Psoas muscle (tissue), 8 donors: ENCODE measurements at regions of chr15 and their contacts with region 1.

Region 1: DNA sequence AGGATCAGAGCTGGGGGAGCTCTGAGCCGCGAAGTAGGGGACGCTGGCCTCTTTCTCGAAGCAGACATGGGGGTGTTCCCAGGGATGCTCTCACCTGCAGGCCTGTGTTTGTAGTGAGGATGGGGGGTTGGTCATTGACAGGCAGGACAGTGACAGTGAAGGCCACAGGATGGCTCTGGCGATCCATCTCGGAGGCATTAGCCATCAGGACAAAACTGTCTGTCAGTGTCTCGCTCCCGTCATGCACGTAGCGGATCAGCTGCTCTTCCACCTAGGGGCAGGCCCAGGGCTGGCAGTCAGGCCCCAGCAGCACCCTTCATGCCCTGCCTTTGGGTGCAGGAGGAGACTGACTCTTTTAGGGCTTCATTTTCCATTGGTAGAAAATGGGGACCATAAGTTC is 28.0 kb downstream of the CSPG4 start:
- DNase-seq: no peak
- ATAC-seq: no peak
- H3K4me3 ChIP-seq: no peak overlapping the region
- H3K27ac ChIP-seq: no peak overlapping the region
- H3K4me1 ChIP-seq: no peaks in the 10 kb centered on the region
- H3K27me3 ChIP-seq: no peaks in the 10 kb centered on the region
- CTCF ChIP-seq: no peak

Region 2: DNA sequence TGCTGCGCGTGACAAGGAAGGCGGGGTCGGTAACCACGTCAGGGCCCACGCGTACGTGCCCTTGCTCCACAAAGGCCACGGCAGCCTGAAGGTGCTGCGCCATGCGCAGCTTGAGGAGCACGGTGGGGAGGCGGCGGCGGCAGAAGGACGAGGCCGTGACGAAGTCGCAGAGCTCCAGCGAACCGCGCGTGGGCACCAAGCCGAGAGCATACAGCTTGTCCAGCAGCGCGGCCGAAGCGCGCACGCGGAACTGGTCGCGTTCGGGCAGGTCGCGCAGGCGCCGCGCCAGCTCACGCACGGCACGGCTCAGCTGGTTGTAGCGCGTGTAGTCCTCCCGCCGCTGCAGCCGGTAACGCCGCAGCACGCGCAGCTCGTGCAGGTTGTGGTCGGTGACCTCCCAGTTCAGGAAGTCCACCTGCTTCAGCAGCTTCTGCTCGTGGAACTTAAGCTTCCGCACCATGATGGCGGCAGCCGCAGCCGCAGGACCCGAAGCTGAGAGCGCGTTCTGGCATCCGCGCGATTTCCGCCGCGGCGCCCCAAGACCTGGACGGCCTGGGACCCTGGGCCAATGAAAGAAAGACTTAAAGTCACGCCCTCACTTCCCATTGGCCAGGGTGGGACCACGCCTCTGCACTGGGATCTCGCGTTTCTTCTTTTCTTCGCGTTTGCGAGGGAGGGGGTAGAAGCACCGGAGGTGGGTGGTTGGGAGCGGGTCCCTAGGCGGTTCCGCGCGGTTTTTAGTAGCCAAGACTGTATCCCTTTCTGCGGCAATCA is 44.7 kb before region 1 on chr15 and contains the start of gene IMP3:
- intact Hi-C with region 1: loop called in 1 of 2 experiments (anchors 2 kb)
- DNase-seq: peak; percentile 94 to 97
- ATAC-seq: peak; percentile 94 to 98 (median 96)
- H3K4me3 ChIP-seq: peak within 1 kb of the TSS; percentile 94
- H3K27ac ChIP-seq: peak within 1 kb of the TSS; percentile 96
- H3K4me1 ChIP-seq: peaks cover 23% of the 10 kb centered on the region
- H3K27me3 ChIP-seq: no peaks in the 10 kb centered on the region
- CTCF ChIP-seq: no peak
- total RNA-seq, gene IMP3: 41.6 to 51.0 (median 43.8) TPM

Region 3: DNA sequence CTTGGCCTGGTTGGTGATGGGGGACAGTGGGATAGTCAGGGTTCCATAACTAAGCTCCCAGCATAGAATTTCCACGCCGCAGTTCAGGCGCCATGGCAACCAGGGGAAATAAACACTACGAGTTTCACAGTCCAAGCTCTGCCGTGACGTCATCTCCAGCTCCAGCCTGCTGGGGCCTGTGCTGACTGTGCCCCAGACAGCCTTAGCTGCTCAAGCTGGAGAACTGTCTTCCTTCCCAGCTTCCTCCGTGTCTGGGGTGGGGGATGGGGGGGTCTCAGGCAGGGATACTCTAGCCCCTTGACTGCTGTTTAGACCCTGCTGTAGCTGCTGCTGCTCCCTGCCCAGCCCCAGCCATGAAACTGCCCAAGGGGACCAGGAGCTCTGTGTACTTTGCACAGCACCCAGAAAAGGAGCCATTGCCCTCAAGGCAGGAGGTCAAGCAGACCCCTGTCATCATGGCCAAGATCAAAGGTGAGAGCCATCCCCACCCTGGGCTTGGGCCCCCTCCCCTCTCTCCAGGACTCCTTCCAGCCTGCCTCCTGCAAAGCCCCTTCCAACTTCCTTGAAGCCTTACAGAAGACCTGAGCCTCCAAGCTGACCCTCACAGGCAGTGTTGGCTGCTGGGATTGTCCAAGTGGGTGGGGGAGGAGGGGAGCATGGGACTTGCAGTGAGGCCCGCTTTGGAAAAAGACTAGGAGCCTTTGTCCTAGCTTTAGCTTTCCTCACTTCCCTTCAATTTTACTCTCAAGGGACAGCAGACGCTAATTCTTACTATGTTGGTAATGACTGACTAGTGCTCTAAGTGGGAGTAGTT is 39.4 kb after region 1 on chr15:
- intact Hi-C with region 1: loop called in 1 of 2 experiments (anchors 5 kb)
- DNase-seq: peak; percentile 85 to 91
- ATAC-seq: peak; percentile 34 to 68 (median 44)
- H3K4me3 ChIP-seq: no peak overlapping the region
- H3K27ac ChIP-seq: peak overlapping the region; percentile 30
- H3K4me1 ChIP-seq: no peaks in the 10 kb centered on the region
- H3K27me3 ChIP-seq: no peaks in the 10 kb centered on the region
- CTCF ChIP-seq: no peak

Region 4: GRCh38 chr15:75732809-75733451 is 48.3 kb after region 1 on chr15:
- intact Hi-C with region 1: loop called in 1 of 2 experiments (anchors 2 kb)
- DNase-seq: peak; percentile 75 to 82
- ATAC-seq: peak; percentile 76 to 88 (median 83)
- H3K4me3 ChIP-seq: no peak overlapping the region
- H3K27ac ChIP-seq: no peak overlapping the region
- H3K4me1 ChIP-seq: no peaks in the 10 kb centered on the region
- H3K27me3 ChIP-seq: no peaks in the 10 kb centered on the region
- CTCF ChIP-seq: peak; percentile 87

Region 5: DNA sequence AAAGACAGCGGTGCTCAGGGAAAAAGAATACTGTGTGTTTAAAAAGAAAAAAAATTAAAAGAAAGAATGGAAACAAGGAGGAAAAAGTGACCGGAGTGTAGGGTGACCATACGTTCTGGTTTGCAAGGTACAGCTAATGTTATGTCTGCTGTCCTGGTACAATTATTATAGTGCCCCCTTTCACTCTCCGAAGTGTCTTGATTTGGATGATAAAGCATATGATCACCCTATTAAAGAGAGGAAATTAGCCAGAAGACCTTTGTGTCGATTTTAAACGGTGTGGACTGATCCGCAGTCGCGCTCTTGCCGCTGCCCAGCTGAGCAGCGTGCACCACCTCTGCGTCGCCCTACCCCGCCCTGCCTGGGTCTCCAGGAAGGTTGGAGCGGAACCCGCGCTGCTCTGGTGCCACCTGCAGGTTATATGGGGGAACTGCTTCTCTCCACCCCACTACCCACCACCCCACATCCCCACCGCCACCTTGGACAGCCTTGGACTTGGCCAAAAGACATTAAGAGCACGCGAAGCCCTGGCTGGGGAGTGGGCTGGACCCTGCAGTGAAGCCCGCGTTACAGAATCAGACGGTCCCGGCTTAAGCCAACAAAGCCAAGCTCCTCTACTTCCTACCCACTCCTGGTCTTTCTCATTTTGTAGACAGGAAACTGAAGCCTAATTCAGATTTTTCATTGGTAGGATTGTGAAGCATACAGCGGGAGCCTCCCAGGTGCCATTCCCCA is 117.4 kb after region 1 on chr15:
- intact Hi-C with region 1: loop called in 1 of 2 experiments (anchors 2 kb)
- DNase-seq: peak; percentile 80 to 91
- ATAC-seq: peak; percentile 98 to 100 (median 99)
- H3K4me3 ChIP-seq: peak overlapping the region; percentile 48
- H3K27ac ChIP-seq: no peak overlapping the region
- H3K4me1 ChIP-seq: no peaks in the 10 kb centered on the region
- H3K27me3 ChIP-seq: no peaks in the 10 kb centered on the region
- CTCF ChIP-seq: peak; percentile 90

Region 6: DNA sequence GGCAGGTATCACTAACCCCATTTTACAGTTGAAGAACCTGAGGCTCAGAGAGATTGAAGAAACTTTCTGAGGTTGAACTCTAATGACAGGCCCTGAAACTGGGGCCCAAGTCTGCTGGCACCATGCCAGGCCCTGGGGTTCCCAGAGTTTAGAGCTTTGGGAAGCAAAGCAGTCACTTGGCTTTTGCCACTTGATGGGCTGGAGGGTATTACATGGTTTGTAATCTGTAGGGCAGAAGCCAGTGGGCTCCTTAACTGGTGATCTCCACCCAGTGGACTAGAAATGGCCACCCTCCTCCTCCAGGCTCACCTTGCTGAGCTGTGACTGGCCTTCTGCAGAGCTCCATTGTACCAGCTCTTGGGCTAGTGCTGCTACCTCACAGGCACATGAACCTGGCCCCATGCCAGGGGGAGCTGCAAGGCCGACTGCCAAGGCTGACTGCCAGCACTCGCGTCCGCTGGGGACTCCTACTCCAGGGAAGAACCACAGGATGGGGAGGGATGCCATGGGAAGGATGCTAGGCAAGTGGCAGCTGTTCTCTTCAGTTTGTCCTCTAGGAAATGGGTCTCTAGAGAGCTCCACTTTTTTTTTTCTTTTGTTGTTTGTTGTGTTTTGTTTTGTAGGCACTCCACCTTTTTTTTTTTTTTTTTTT is 521.8 kb after region 1 on chr15:
- intact Hi-C with region 1: no loop called
- DNase-seq: peak; percentile 82 to 90
- ATAC-seq: peak; percentile 77 to 83 (median 80)
- H3K4me3 ChIP-seq: no peak overlapping the region
- H3K27ac ChIP-seq: no peak overlapping the region
- H3K4me1 ChIP-seq: peaks cover 5% of the 10 kb centered on the region
- H3K27me3 ChIP-seq: no peaks in the 10 kb centered on the region
- CTCF ChIP-seq: no peak